ENCODE measurements at regions of chr3 and their contacts with region 1.

Region 1: GRCh38 chr3:60588806-60589205 is 662.4 kb downstream of the FHIT start:
- DNase-seq: peak; percentile 93
- ATAC-seq: peak; percentile 97
- H3K4me3 ChIP-seq: no peak overlapping the region
- H3K27ac ChIP-seq: peak overlapping the region; percentile 68
- H3K4me1 ChIP-seq: peaks cover 15% of the 10 kb centered on the region
- H3K27me3 ChIP-seq: no peaks in the 10 kb centered on the region
- CTCF ChIP-seq: no peak

Region 2: DNA sequence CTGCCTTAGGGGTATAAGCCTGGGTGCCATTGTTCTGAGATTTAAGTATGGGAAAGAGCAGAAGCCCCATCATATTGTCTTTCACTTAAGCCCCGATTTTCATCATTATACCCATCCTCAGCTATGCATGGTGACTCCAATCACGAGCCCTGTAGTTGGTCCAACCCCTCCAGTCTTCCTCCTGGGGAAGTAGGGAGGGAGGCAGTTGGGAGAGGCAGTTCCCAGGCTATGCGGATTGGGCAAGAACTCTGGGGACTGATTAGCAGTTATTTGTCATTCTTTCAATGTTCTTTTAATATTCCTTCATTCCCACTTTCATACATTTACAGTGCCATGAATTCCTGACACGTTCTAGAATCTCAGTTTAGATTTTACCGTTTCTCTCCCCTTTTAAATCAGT is 244.3 kb after region 1 on chr3:
- CTCF ChIA-PET with region 1: interaction called, 11 read pairs
- POLR2A ChIA-PET with region 1: no interaction called
- intact Hi-C with region 1: no loop called
- DNase-seq: no peak
- ATAC-seq: no peak
- H3K4me3 ChIP-seq: no peak overlapping the region
- H3K27ac ChIP-seq: no peak overlapping the region
- H3K4me1 ChIP-seq: peaks cover 16% of the 10 kb centered on the region
- H3K27me3 ChIP-seq: no peaks in the 10 kb centered on the region
- CTCF ChIP-seq: no peak